PC-9 (cell line): ENCODE measurements at regions of chr19 and their contacts with region 1.

Region 1: DNA sequence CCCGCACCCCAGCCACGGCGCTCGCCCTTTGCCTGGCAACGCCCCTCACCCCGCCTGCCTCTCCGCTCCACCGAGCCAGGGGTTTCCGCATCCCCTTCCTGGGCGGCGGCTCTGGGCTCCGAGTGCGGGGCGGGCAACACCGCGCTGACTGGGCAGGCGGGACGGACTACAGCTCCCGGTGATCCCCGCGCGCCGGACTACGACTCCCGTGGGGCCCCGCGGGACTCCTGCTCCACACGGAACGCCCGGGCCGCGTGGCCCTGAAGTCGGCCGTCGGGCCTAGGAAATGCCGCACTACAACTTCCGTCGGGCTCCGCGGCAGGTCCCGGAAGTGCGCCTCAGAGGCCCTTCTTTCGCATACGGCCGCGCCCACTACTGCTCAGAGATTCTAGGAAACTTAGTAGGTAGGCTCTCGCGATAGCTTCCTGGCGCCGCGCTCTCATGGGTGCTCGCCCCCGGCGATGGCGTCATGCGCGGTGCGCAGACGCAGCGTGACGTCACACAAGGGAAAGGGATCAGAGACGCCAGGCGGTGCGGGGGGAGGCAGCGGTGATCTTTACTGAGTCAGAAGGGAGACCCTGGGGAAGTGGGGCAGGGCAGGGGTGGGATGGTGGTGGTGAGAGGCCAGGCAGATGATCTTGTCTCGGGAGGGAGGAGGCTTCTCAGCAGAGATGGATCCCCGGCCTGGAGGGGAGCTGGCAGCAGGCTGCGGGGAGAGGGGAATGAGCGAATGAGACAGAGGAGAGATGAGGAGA is at the start of gene JOSD2:
- DNase-seq: peak; percentile 97 to 99
- H3K4me3 ChIP-seq: peak within 1 kb of the TSS; percentile 65
- H3K27ac ChIP-seq: peak within 1 kb of the TSS; percentile 40; the same call in 1 of the 2 replicates
- H3K4me1 ChIP-seq: peaks cover 6% of the 10 kb centered on the region
- H3K27me3 ChIP-seq: no peaks in the 10 kb centered on the region
- CTCF ChIP-seq: no peak
- total RNA-seq, gene JOSD2: 44.3 and 56.0 TPM in 2 replicates

Region 2: GRCh38 chr19:50376166-50377050 is 134.8 kb before region 1 on chr19 and contains the start of gene NR1H2:
- CTCF ChIA-PET with region 1: no interaction called
- POLR2A ChIA-PET with region 1: no interaction called
- intact Hi-C with region 1: loop called (anchors 2 kb)
- DNase-seq: peak; percentile 89 to 94
- H3K4me3 ChIP-seq: peak within 1 kb of the TSS; percentile 99
- H3K27ac ChIP-seq: peak within 1 kb of the TSS; percentile 98
- H3K4me1 ChIP-seq: 0 out of 2 replicates have a peak, but pooled peaks cover 6% of the 10 kb centered on the region
- H3K27me3 ChIP-seq: no peaks in the 10 kb centered on the region
- CTCF ChIP-seq: no peak
- total RNA-seq, gene NR1H2: 77.5 and 81.7 TPM in 2 replicates

Region 3: DNA sequence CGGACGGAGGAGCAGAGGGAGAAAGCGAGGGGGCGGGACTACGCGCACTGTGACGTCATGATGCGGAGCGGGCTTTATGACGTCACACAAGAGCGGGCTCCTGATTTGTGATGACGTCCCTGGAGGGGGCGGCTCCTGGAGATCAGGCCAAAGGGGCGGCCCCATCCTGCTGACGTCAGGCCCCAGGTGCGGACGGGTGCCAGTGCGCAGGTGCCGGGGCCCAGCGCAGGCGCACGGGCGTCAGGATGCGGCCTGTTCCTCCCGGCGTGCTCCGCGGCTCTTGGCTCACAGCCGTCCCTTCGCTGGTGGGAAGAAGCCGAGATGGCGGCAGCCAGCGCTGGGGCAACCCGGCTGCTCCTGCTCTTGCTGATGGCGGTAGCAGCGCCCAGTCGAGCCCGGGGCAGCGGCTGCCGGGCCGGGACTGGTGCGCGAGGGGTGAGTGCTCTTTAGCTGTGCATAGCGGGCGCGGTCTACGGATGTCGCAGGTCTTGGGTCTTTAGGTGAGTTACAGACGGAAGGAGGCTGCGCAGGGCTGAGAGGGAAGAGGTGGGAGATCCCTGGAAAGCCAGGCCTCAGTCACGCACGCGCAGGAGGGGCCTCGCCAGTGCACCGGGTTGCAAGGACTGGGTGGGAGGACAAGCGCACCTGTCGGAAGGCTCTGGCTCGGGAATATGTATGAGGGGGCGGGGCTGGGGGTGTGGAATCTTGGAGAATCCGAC is 34.9 kb before region 1 on chr19 and contains the starts of genes EMC10 and GARIN5A:
- CTCF ChIA-PET with region 1: no interaction called
- POLR2A ChIA-PET with region 1: no interaction called
- intact Hi-C with region 1: loop called (anchors 1 kb)
- DNase-seq: peak; percentile 90 to 96
- H3K4me3 ChIP-seq: peak within 1 kb of the TSS; percentile 72
- H3K27ac ChIP-seq: peak within 1 kb of the TSS; percentile 65
- H3K4me1 ChIP-seq: peaks cover 8% of the 10 kb centered on the region
- H3K27me3 ChIP-seq: no peaks in the 10 kb centered on the region
- CTCF ChIP-seq: no peak
- total RNA-seq, gene EMC10: 118 and 121 TPM in 2 replicates
- total RNA-seq, gene GARIN5A: 3.7 and 7.3 TPM in 2 replicates

Region 4: GRCh38 chr19:51259348-51260245 is 748.4 kb after region 1 on chr19:
- CTCF ChIA-PET with region 1: no interaction called
- POLR2A ChIA-PET with region 1: interaction called, 11 read pairs
- intact Hi-C with region 1: no loop called
- DNase-seq: peak in 1 of 2 experiments; percentile 30
- H3K4me3 ChIP-seq: no peak overlapping the region
- H3K27ac ChIP-seq: no peak overlapping the region
- H3K4me1 ChIP-seq: no peaks in the 10 kb centered on the region
- H3K27me3 ChIP-seq: peaks cover 87% of the 10 kb centered on the region
- CTCF ChIP-seq: peak; percentile 77